ENCODE measurements at regions of chr7 and their contacts with region 1.

Region 1: DNA sequence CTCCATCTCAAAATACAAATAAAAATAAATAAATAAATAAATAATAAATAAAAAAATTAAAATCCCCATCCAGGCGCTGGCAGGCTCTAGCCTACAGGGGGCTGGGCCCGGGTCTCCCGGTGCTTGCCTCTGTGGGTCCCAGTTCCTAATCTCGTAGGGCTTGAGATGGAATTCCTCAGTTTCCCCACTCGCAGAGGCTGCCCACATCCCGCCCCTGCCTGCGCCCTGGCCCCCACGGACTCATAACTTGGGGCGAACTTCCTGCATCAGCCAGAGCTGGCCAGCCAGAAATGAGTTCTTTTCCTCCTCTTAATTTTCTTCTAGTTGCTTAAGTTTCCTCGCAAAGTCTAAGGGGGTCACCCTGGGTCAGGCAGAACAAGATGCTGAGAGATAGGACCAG is 22.0 kb upstream of the SRRM3 start:
- DNase-seq: no peak
- CTCF ChIP-seq: no peak

Region 2: GRCh38 chr7:76166404-76167255 is 13.1 kb before region 1 on chr7:
- CTCF ChIA-PET with region 1: interaction called, 45 read pairs
- POLR2A ChIA-PET with region 1: no interaction called
- DNase-seq: peak; percentile 93
- CTCF ChIP-seq: no peak

Region 3: DNA sequence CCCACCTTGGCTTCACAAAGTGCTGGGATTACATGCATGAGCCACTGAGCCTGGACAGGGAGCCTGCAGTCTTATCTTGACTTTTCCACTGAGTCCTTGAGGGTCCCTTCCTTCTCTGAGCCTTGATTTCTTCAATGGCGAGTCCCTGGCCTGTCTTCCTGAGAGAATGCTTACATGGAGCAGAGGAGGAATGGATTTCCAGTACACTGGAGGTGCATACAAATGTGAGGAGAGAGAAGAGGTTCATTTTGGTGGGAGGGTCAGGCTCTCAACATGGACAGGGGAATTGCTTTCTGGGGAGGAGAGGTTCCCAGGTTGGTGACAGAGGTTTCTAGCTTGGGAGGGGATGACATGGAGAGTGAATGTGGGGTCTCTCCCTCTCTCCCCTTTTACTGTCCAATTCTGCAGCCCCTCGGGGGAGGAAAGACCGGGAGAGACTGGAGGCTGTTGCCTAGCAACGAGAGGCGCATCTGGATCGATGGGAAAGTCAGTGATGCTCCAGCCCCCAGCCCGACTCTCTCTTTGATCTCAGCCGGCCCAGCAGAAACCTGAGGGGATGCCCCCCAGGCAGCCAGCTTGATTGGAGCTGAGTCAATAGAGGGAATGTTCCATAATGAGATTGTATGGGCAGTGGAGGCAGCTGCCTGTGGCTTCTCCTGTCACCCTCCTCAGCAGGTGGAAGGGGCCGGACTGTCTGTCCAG is 36.8 kb after region 1 on chr7:
- CTCF ChIA-PET with region 1: interaction called, 13 read pairs
- POLR2A ChIA-PET with region 1: no interaction called
- DNase-seq: no peak
- CTCF ChIP-seq: no peak

Region 4: GRCh38 chr7:76234931-76235441 is 55.3 kb after region 1 on chr7:
- CTCF ChIA-PET with region 1: interaction called, 10 read pairs
- POLR2A ChIA-PET with region 1: no interaction called
- DNase-seq: peak; percentile 88
- CTCF ChIP-seq: no peak

Region 5: GRCh38 chr7:76291343-76292212 is 111.9 kb after region 1 on chr7:
- CTCF ChIA-PET with region 1: interaction called, 10 read pairs
- POLR2A ChIA-PET with region 1: no interaction called
- DNase-seq: peak; percentile 92
- CTCF ChIP-seq: peak; percentile 98

Region 6: DNA sequence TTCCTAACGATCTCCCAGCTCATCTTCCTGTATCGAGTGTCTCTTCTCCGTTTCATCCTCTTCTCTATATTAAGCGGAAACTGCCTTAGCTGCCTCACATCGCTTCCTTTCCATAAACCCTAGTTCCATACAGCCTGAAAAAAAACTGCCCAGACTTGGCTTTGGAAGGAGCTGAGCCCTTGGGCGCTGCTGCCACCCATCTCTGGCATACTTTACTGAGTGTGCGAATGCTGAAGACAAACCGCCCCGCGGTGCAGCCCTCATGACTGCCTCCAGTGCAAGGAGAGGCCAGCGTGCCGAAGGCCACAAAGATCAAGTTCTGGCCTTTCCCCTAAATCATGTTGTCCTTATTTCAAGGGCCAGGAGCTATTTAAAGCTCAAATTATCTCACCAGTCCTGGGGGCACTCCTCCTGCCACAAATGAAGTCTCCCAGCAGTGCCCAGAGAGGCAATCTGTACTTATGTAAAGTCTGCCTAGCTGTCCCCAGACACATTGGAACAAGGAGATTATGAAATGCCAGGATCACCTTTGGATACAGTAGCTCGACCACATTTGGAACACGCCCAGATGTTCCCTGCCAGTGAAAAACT is 153.9 kb after region 1 on chr7:
- CTCF ChIA-PET with region 1: no interaction called
- POLR2A ChIA-PET with region 1: no interaction called
- DNase-seq: no peak
- CTCF ChIP-seq: no peak

Region 7: GRCh38 chr7:76359111-76359978 is 179.7 kb after region 1 on chr7:
- CTCF ChIA-PET with region 1: interaction called, 12 read pairs
- POLR2A ChIA-PET with region 1: no interaction called
- DNase-seq: peak; percentile 97
- CTCF ChIP-seq: peak; percentile 82

Measured in GM10248 (cell line).